IMR-90 (cell line): ENCODE measurements at regions of chr4 and their contacts with region 1.

Region 1: GRCh38 chr4:107050525-107051135 is 14.5 kb upstream of the DKK2 start:
- DNase-seq: peak; percentile 10
- ATAC-seq: no peak
- H3K4me3 ChIP-seq: no peak overlapping the region
- H3K27ac ChIP-seq: no peak overlapping the region
- H3K4me1 ChIP-seq: no peaks in the 10 kb centered on the region
- H3K27me3 ChIP-seq: no peaks in the 10 kb centered on the region
- CTCF ChIP-seq: peak; percentile 48
- POLR2A ChIP-seq: no peak
- RAD21 ChIP-seq: peak; percentile 43

Region 2: DNA sequence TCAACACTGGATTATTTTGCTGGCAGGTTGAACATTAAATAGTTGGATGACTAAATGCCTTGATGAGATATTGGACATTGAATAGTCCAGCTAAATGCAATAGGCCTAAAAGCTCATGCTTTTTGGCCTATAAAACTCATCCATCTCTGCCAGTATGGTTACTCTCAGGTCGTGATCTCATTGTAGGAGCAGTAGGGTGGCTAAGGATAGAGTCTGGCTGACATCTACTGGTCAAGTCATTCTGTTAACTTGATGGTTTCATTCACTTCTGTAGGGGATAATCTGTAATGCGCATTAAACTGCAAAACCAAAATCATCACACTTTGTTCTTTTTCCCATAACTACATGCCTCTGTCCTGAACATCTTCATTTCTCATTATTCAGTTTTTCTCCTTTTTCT is 241.6 kb before region 1 on chr4:
- CTCF ChIA-PET with region 1: no interaction called
- POLR2A ChIA-PET with region 1: no interaction called
- dilution Hi-C with region 1: no loop called
- in situ Hi-C with region 1: no loop called
- intact Hi-C with region 1: no loop called
- DNase-seq: peak; percentile 25
- ATAC-seq: 0 out of 2 replicates have a peak, but pooled peaks have one; percentile 51
- H3K4me3 ChIP-seq: no peak overlapping the region
- H3K27ac ChIP-seq: no peak overlapping the region
- H3K4me1 ChIP-seq: no peaks in the 10 kb centered on the region
- H3K27me3 ChIP-seq: no peaks in the 10 kb centered on the region
- CTCF ChIP-seq: peak; percentile 30; the same call in 1 of the 2 replicates
- POLR2A ChIP-seq: no peak
- RAD21 ChIP-seq: peak; percentile 46

Region 3: GRCh38 chr4:107472276-107472948 is 421.8 kb after region 1 on chr4:
- CTCF ChIA-PET with region 1: no interaction called
- POLR2A ChIA-PET with region 1: interaction called, 10 read pairs
- dilution Hi-C with region 1: no loop called
- in situ Hi-C with region 1: no loop called
- intact Hi-C with region 1: no loop called
- DNase-seq: no peak
- ATAC-seq: no peak
- H3K4me3 ChIP-seq: no peak overlapping the region
- H3K27ac ChIP-seq: no peak overlapping the region
- H3K4me1 ChIP-seq: no peaks in the 10 kb centered on the region
- H3K27me3 ChIP-seq: no peaks in the 10 kb centered on the region
- CTCF ChIP-seq: no peak
- POLR2A ChIP-seq: no peak
- RAD21 ChIP-seq: no peak

Region 4: DNA sequence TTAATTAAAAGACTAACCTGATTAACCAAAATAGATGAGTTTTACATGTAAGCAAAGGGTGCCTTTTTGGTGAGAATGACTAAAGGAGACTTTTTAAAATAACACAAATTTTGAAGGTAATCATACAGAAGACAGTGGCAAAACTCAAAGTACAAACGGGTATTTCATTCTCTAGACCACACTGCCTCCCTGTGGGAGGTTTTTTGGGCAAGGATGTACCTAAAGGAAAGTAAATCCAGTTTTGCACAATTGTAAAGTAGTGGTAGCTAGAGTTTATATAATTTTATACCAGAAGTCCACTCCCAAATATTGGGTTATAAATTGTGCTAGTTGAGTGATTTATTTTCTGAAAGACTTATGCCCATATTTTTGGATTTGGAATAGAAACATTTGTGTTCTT is 468.4 kb after region 1 on chr4:
- CTCF ChIA-PET with region 1: no interaction called
- POLR2A ChIA-PET with region 1: no interaction called
- dilution Hi-C with region 1: no loop called
- in situ Hi-C with region 1: no loop called
- intact Hi-C with region 1: loop called (anchors 5 kb)
- DNase-seq: peak; percentile 5
- ATAC-seq: no peak
- H3K4me3 ChIP-seq: no peak overlapping the region
- H3K27ac ChIP-seq: no peak overlapping the region
- H3K4me1 ChIP-seq: no peaks in the 10 kb centered on the region
- H3K27me3 ChIP-seq: no peaks in the 10 kb centered on the region
- CTCF ChIP-seq: peak; percentile 42
- POLR2A ChIP-seq: no peak
- RAD21 ChIP-seq: peak; percentile 39

Region 5: DNA sequence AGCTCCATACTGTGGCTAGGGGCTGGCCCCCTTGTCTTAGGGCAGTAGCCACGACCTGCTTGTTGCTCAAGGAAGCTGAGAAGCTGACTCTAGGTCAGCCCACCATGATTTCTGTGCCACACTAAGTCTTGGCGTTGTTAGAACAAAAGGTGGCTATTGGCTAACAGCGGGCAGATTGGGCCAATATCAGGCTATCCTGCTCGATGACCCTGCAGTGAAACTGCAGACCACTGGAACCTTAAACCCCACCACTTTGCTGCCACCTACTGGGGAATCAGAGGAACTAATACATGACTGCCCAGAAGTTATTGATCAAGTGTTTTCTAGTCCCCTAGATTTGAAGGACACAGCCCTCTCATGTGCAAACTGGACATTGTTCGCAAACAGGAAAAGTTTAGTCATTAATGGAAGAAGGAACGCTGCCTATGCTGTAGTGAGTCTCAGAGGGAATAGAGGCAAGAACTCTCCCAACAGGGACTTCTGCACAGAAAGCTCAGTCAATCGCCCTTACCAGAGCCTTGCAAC is 686.4 kb after region 1 on chr4:
- CTCF ChIA-PET with region 1: no interaction called
- POLR2A ChIA-PET with region 1: no interaction called
- dilution Hi-C with region 1: no loop called
- in situ Hi-C with region 1: no loop called
- intact Hi-C with region 1: loop called (anchors 10 kb)
- DNase-seq: peak; percentile 57
- ATAC-seq: peak; percentile 73
- H3K4me3 ChIP-seq: no peak overlapping the region
- H3K27ac ChIP-seq: no peak overlapping the region
- H3K4me1 ChIP-seq: peaks cover 8% of the 10 kb centered on the region
- H3K27me3 ChIP-seq: peaks cover 4% of the 10 kb centered on the region; the same call in 1 of the 2 replicates
- CTCF ChIP-seq: peak; percentile 70
- POLR2A ChIP-seq: no peak
- RAD21 ChIP-seq: peak; percentile 83